ENCODE measurements at regions of chr6 and their contacts with region 1.

Region 1: GRCh38 chr6:44593539-44593944 is 206.0 kb downstream of the CDC5L start:
- DNase-seq: peak; percentile 63
- H3K4me3 ChIP-seq: peak overlapping the region in 1 of 2 experiments; percentile 10; a peak in 1 of 4 replicates
- H3K27ac ChIP-seq: no peak overlapping the region
- H3K4me1 ChIP-seq: no peaks in the 10 kb centered on the region
- H3K27me3 ChIP-seq: peaks cover 14% of the 10 kb centered on the region; the same call in 1 of the 2 replicates
- CTCF ChIP-seq: peak; percentile 73
- EP300 ChIP-seq: no peak
- RAD21 ChIP-seq: peak; percentile 67

Region 2: DNA sequence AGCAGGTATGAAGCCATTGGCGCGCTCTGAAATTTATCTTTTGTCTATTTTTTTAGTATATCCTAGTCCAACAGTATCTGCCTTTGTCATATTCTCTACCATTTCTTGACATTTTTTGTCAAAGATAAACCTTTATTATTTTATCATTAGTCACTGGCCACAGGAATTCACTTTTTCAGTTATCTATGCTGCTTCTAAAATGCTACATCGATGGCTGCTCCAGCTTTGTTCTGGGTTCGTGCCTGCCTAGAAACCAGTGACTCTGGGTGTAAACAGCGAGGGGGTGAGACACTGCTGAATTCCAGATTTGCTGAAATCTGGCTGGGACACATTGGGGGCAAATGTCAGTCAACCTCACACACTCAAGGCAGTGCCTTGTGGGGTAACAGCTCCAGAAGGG is 12.6 kb before region 1 on chr6:
- CTCF ChIA-PET with region 1: interaction called, 11 read pairs
- POLR2A ChIA-PET with region 1: no interaction called
- DNase-seq: no peak
- H3K4me3 ChIP-seq: no peak overlapping the region
- H3K27ac ChIP-seq: peak overlapping the region in 1 of 2 experiments; percentile 44; a peak in 2 of 4 replicates
- H3K4me1 ChIP-seq: peaks cover 0 to 5% of the 10 kb centered on the region in 2 experiments; a peak in 1 of 4 replicates
- H3K27me3 ChIP-seq: no peaks in the 10 kb centered on the region
- CTCF ChIP-seq: no peak
- EP300 ChIP-seq: no peak
- RAD21 ChIP-seq: no peak